GM10248 (cell line): ENCODE measurements at regions of chr2 and their contacts with region 1.

Region 1: DNA sequence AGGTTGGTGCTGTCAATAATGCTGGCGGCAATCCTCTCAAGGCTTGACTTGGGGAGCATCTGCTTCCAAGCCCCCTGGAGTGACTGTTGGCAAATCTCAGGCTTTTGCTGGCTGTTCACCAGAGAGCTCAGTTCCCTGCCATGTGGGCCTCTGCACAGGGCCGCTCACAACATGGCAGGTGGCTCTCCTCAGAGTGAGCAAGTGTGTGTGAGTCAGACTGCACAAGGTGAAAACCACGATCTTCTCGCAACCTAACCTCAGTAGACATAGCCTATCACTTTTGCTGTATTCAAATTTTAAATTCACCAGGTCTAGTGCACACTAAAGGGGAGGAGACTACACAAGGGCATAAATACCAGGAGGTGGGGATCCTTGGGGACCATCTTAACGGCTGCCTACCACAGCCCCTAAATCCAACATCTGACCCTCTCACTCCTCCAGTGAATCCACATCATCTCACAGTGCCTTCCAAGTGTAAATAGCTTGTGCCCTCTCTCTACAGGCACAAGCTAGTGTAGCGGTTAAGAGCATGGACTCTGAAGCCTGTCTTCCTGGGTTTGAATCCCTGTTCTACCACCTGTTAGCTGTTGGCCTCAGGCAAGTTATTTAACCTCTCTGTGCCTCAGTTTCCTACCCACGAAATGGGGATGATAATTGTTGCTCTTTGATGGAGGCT is 187.7 kb upstream of the CXCR4 start:
- DNase-seq: peak; percentile 38
- CTCF ChIP-seq: no peak

Region 2: DNA sequence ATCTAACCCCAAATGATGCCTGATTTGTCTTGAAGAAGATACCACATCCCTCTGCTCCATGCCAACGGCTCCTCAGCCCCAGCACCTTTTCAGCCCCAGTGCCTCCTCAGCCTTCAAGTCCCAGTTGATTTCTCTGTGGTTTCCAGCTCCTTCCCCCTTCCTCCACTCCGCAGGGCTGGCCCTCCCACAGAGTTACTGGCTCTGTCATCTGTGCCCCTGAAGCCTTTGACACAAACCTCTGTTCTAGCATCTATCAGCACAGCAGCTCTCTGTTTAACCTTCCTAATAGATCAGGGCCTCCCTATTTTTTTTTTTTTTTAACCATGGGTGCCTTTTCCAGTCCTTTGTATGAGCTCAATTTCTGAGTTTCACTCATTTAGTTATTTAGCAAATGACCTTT is 13.6 kb after region 1 on chr2:
- CTCF ChIA-PET with region 1: interaction called, 13 read pairs
- POLR2A ChIA-PET with region 1: no interaction called
- DNase-seq: peak; percentile 35
- CTCF ChIP-seq: no peak

Region 3: GRCh38 chr2:136342138-136342537 is 36.5 kb after region 1 on chr2:
- CTCF ChIA-PET with region 1: no interaction called
- POLR2A ChIA-PET with region 1: no interaction called
- DNase-seq: no peak
- CTCF ChIP-seq: no peak

Region 4: GRCh38 chr2:136448432-136448831 is 142.8 kb after region 1 on chr2:
- CTCF ChIA-PET with region 1: no interaction called
- POLR2A ChIA-PET with region 1: no interaction called
- DNase-seq: no peak
- CTCF ChIP-seq: no peak